GM10248 (cell line): ENCODE measurements at regions of chr12 and their contacts with region 1.

Region 1: DNA sequence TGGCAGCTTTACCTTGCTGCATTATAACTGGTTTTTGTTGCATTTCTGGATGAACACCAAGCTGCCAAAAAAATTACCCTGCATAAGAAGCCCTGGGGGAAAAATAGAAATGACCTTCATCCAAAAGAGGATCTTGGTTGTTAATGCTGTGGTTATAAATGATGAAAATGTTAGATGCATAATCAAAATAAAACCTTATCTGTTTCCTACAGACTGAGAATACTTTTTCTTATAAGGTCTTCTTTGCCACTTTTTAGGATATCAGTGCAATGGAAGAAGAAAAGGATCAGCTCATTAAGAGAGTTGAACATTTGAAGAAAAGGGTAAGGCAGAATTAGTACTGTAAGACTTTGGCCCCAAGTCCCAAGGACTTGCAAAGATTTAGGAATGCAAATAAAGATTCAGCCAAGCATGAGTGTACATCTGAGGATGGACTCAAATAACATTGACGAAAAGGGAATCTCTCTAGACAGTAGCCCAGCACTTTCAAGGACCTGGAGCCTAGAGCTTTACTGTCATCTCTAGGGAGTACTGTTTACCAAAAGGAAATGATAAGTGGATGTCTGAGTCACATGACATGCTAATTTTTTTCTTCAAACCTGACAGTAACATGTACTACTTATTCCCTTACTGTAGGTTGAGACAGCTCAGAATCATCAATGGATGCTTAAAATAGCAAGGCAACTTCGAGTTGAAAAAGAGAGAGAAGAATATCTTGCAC is 10.7 kb downstream of the IFT81 start:
- DNase-seq: no peak
- CTCF ChIP-seq: no peak

Region 2: GRCh38 chr12:111124183-111124582 is 989.3 kb after region 1 on chr12:
- CTCF ChIA-PET with region 1: no interaction called
- POLR2A ChIA-PET with region 1: interaction called, 13 read pairs
- DNase-seq: no peak
- CTCF ChIP-seq: no peak

Region 3: GRCh38 chr12:112012775-112013600 is 1878.1 kb after region 1 on chr12 and contains the starts of genes ERP29 and TMEM116:
- CTCF ChIA-PET with region 1: no interaction called
- POLR2A ChIA-PET with region 1: interaction called, 10 read pairs
- DNase-seq: peak; percentile 100
- CTCF ChIP-seq: peak; percentile 52